Activated CD4-positive, alpha-beta memory T cell treated with anti-CD3 and anti-CD28 coated beads for 36 hours (primary cell): ENCODE measurements at regions of chr9 and their contacts with region 1.

Region 1: GRCh38 chr9:119802621-119803020 is 433.4 kb upstream of the BRINP1 start:
- DNase-seq: no peak
- H3K4me3 Mint-ChIP-seq: no peak overlapping the region
- H3K27ac Mint-ChIP-seq: no peak overlapping the region
- H3K4me1 Mint-ChIP-seq: no peaks in the 10 kb centered on the region
- H3K27me3 Mint-ChIP-seq: no peaks in the 10 kb centered on the region

Region 2: DNA sequence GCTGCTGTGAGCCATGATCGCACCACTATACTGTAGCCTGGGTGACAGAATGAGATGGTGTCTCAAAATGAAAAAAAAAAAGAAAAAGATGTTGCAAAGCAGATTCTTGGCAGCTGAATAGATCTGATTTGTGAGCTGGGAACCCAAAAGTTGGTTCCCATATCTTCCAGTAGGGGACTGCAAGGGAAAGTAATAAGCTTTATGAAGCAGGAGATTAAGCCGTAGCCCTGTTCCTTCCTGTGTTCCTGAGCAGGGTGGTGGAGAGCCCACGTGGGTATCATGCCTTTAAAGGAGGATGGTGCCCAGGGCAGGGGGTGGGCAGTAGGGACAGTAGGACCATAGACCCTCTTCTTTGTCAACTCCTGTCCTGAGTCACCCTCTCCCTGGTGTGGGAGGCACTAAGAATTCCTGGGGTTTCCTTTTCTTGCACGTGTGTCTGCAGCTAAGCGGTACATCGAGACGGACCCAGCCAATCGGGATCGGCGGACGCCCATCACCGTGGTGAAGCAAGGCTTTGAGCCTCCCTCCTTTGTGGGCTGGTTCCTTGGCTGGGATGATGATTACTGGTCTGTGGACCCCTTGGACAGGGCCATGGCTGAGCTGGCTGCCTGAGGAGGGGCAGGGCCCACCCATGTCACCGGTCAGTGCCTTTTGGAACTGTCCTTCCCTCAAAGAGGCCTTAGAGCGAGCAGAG is 1529.5 kb after region 1 on chr9:
- CTCF ChIA-PET with region 1: no interaction called
- POLR2A ChIA-PET with region 1: no interaction called
- intact Hi-C with region 1: loop called (anchors 10 kb)
- DNase-seq: no peak
- H3K4me3 Mint-ChIP-seq: no peak overlapping the region
- H3K27ac Mint-ChIP-seq: no peak overlapping the region
- H3K4me1 Mint-ChIP-seq: no peaks in the 10 kb centered on the region
- H3K27me3 Mint-ChIP-seq: no peaks in the 10 kb centered on the region